PC-9 (cell line): ENCODE measurements at regions of chr10 and their contacts with region 1.

Region 1: GRCh38 chr10:11560076-11560709 is 51.3 kb downstream of the USP6NL start:
- DNase-seq: no peak
- H3K4me3 ChIP-seq: no peak overlapping the region
- H3K27ac ChIP-seq: no peak overlapping the region
- H3K4me1 ChIP-seq: no peaks in the 10 kb centered on the region
- H3K27me3 ChIP-seq: no peaks in the 10 kb centered on the region
- CTCF ChIP-seq: no peak

Region 2: GRCh38 chr10:11488126-11488525 is 72.1 kb before region 1 on chr10:
- CTCF ChIA-PET with region 1: no interaction called
- POLR2A ChIA-PET with region 1: no interaction called
- intact Hi-C with region 1: no loop called
- DNase-seq: no peak
- H3K4me3 ChIP-seq: no peak overlapping the region
- H3K27ac ChIP-seq: no peak overlapping the region
- H3K4me1 ChIP-seq: no peaks in the 10 kb centered on the region
- H3K27me3 ChIP-seq: no peaks in the 10 kb centered on the region
- CTCF ChIP-seq: no peak

Region 3: DNA sequence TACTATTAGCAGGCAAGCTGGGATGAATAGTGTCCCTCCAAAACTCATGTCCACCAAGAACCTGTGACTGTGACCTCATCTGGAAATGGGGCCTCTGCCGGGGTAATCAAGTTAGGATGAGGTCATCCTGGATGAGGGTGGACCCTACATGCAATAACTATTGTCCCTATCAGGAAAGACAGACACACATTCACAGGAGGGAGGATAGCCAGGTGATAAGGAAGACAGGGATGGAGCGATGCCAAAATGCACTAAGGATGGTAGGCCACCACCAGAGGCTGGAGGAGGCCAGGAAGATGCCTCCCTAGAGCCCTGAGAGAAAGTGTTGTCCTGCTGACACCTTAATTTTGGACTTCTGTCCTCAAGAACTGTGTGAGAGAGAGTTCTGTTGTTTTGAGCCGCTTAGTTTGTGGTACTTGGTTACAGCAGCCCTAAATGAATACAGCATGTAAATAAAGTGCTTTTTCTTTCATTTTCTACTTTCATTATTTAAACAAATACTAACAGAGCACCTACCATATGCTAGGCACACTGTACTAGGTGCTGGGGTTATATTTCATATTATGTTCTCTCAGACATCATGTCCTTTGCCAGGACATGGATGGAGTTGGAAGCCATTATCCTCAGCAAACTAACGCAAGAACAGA is 60.6 kb before region 1 on chr10:
- CTCF ChIA-PET with region 1: no interaction called
- POLR2A ChIA-PET with region 1: no interaction called
- intact Hi-C with region 1: no loop called
- DNase-seq: no peak
- H3K4me3 ChIP-seq: no peak overlapping the region
- H3K27ac ChIP-seq: no peak overlapping the region
- H3K4me1 ChIP-seq: no peaks in the 10 kb centered on the region
- H3K27me3 ChIP-seq: no peaks in the 10 kb centered on the region
- CTCF ChIP-seq: no peak

Region 4: DNA sequence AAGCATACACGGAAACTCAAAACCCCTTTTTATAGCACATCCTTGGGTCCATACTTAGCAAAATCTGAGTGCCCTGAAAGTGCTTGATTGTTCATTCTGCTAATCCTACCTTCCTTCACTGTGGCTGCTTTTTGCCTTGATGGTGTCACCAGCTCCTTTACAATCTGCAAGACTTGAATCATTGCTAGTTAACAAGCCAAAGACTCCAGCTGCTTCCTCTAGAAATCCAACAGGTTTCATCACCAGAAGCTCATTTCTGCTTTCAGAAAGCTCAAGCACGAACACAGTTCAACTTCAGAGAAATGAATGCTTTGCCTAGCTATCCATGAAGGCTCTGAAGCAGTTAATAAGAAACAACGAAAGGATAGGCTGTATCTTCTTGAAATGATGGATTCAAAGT is 13.3 kb after region 1 on chr10:
- CTCF ChIA-PET with region 1: no interaction called
- POLR2A ChIA-PET with region 1: no interaction called
- intact Hi-C with region 1: loop called (anchors 1 kb)
- DNase-seq: no peak
- H3K4me3 ChIP-seq: no peak overlapping the region
- H3K27ac ChIP-seq: no peak overlapping the region
- H3K4me1 ChIP-seq: no peaks in the 10 kb centered on the region
- H3K27me3 ChIP-seq: no peaks in the 10 kb centered on the region
- CTCF ChIP-seq: no peak